ENCODE measurements at regions of chr10 and their contacts with region 1.

Region 1: GRCh38 chr10:113678690-113679462 is 836 bp upstream of the CASP7 start:
- DNase-seq: peak; percentile 61
- H3K4me3 Mint-ChIP-seq: peak overlapping the region; percentile 92
- H3K27ac Mint-ChIP-seq: peak overlapping the region; percentile 55
- H3K4me1 Mint-ChIP-seq: peaks cover 40% of the 10 kb centered on the region
- H3K27me3 Mint-ChIP-seq: peaks cover 14% of the 10 kb centered on the region

Region 2: DNA sequence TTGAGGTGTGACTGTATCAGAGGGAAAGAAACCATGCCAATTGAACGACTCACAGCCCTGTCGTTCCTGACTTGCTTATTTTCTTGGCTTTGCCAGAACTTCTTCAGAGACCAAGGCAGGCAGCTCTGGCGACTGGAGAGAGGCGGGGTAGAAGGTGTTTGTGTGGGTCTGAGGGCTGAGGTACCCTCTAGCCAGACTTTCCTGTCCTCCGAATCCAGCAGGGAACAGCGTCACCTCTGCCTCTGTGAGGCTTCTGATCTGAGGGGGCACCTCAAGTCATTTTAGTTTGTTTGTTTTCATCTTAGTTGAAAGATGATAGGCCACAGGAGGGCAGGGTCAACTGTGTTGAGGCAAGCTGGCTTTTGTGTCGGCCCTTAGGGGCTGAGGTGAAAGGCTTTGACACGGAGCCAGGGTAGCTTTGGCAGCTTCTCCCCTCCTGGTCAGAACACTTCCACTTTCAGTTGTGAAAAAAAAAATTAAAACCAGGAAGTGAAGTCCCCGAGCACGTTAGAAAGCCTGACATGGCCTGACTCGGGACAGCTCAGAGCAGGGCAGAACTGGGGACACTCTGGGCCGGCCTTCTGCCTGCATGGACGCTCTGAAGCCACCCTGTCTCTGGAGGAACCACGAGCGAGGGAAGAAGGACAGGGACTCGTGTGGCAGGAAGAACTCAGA is 1303.0 kb before region 1 on chr10:
- intact Hi-C with region 1: loop called (anchors 10 kb)
- DNase-seq: peak; percentile 47
- H3K4me3 Mint-ChIP-seq: peak overlapping the region; percentile 98
- H3K27ac Mint-ChIP-seq: peak overlapping the region; percentile 100
- H3K4me1 Mint-ChIP-seq: peaks cover 47% of the 10 kb centered on the region
- H3K27me3 Mint-ChIP-seq: no peaks in the 10 kb centered on the region

Region 3: DNA sequence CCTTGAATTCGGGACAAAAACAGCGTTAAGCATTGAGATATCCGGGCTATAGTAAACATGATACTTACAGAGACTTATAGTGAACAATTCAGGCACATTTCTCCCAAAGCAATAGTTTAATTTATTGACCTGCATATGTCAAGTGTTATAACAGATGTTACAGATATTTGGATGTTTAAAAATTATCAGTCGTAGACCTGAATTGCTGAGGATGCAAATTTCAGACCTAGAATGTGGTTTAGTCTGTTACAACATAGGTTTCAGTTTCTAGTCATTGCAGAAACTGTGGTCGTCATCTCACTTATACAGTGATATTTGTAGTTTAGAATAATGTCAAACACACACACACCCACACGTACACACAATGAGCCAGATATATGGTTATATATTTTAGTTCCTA is 1146.7 kb before region 1 on chr10:
- intact Hi-C with region 1: loop called (anchors 10 kb)
- DNase-seq: no peak
- H3K4me3 Mint-ChIP-seq: peak overlapping the region; percentile 8
- H3K27ac Mint-ChIP-seq: no peak overlapping the region
- H3K4me1 Mint-ChIP-seq: peaks cover 36% of the 10 kb centered on the region
- H3K27me3 Mint-ChIP-seq: peaks cover 13% of the 10 kb centered on the region

Region 4: GRCh38 chr10:113689057-113689456 is 10.2 kb after region 1 on chr10:
- intact Hi-C with region 1: no loop called
- DNase-seq: no peak
- H3K4me3 Mint-ChIP-seq: peak overlapping the region; percentile 24
- H3K27ac Mint-ChIP-seq: peak overlapping the region; percentile 26
- H3K4me1 Mint-ChIP-seq: peaks cover 33% of the 10 kb centered on the region
- H3K27me3 Mint-ChIP-seq: no peaks in the 10 kb centered on the region

Region 5: GRCh38 chr10:113854011-113854760 is 175.3 kb after region 1 on chr10 and contains the starts of genes DCLRE1A and NHLRC2:
- intact Hi-C with region 1: loop called (anchors 2 kb)
- DNase-seq: peak; percentile 29
- H3K4me3 Mint-ChIP-seq: peak within 1 kb of the TSS; percentile 97
- H3K27ac Mint-ChIP-seq: peak within 1 kb of the TSS; percentile 95
- H3K4me1 Mint-ChIP-seq: peaks cover 56% of the 10 kb centered on the region
- H3K27me3 Mint-ChIP-seq: no peaks in the 10 kb centered on the region
- total RNA-seq, gene DCLRE1A: 14.1 and 15.2 TPM in 2 replicates
- total RNA-seq, gene NHLRC2: 25.9 and 26.0 TPM in 2 replicates

Region 6: DNA sequence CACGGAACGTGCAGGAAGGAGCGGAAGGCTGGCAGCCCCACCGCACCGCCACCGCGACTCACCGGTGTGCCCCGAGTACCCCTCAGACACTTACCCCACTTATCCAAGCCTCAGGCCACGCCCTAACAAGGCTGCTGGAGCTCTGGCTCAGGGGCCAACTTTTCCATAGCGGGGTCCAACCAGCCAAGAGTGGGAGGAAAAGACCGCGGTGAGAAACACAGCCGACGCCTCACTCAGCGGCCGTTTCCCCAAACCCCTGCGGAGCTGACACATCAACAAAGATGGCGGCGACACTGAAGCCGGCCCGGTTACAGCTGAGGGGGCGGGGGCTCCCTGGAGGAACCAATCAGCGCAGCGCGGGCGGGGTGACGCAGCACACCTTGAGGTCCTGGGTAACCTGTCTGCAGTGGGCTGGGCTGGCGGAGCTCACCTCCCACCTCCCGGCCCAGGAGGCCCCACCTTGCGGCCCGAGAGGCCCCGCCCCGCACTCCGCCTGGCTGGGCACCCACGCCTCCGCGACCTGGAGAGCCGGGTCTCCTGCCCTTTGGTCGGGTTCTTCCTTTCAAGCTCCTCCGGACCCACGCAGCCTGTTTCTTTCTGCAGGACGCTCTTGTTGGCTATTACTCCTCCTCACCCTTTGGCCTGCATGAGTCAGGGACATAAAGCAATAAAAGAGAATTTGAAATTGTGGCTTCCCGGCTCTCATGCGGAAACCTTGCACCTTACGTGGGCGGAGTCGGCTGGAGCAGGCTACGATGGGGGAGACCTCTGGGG is 495.2 kb after region 1 on chr10 and contains the start of gene CCDC186:
- intact Hi-C with region 1: loop called (anchors 1 kb)
- DNase-seq: peak; percentile 95
- H3K4me3 Mint-ChIP-seq: peak within 1 kb of the TSS; percentile 97
- H3K27ac Mint-ChIP-seq: peak within 1 kb of the TSS; percentile 95
- H3K4me1 Mint-ChIP-seq: peaks cover 24% of the 10 kb centered on the region
- H3K27me3 Mint-ChIP-seq: peaks cover 26% of the 10 kb centered on the region
- total RNA-seq, gene CCDC186: 11.3 and 13.9 TPM in 2 replicates